CD4-positive, alpha-beta memory T cell (primary cell): ENCODE measurements at regions of chr14 and their contacts with region 1.

Region 1: GRCh38 chr14:76876076-76876475 is 49.9 kb downstream of the LRRC74A start:
- DNase-seq: peak in 4 of 5 donors; percentile 41 to 50 (median 44)
- H3K4me3 ChIP-seq: no peak overlapping the region
- H3K4me3 Mint-ChIP-seq: no peak overlapping the region
- H3K27ac ChIP-seq: no peak overlapping the region
- H3K27ac Mint-ChIP-seq: peak overlapping the region in 2 of 7 donors; percentile 10 to 31
- H3K4me1 ChIP-seq: no peaks in the 10 kb centered on the region
- H3K4me1 Mint-ChIP-seq: no peaks in the 10 kb centered on the region
- H3K27me3 ChIP-seq: no peaks in the 10 kb centered on the region
- H3K27me3 Mint-ChIP-seq: peaks cover 0 to 3% of the 10 kb centered on the region in 2 donors

Region 2: GRCh38 chr14:76710056-76711010 is 165.7 kb before region 1 on chr14:
- CTCF ChIA-PET with region 1: interaction called, 16 read pairs
- POLR2A ChIA-PET with region 1: no interaction called
- intact Hi-C with region 1: no loop called
- DNase-seq: peak in 4 of 5 donors; percentile 14 to 40 (median 26)
- H3K4me3 ChIP-seq: no peak overlapping the region
- H3K4me3 Mint-ChIP-seq: no peak overlapping the region
- H3K27ac ChIP-seq: no peak overlapping the region
- H3K27ac Mint-ChIP-seq: no peak overlapping the region
- H3K4me1 ChIP-seq: no peaks in the 10 kb centered on the region
- H3K4me1 Mint-ChIP-seq: no peaks in the 10 kb centered on the region
- H3K27me3 ChIP-seq: no peaks in the 10 kb centered on the region
- H3K27me3 Mint-ChIP-seq: peaks cover 6 to 9% of the 10 kb centered on the region in 2 donors

Region 3: GRCh38 chr14:76773188-76773885 is 102.7 kb before region 1 on chr14:
- CTCF ChIA-PET with region 1: no interaction called
- POLR2A ChIA-PET with region 1: no interaction called
- intact Hi-C with region 1: no loop called
- DNase-seq: no peak
- H3K4me3 ChIP-seq: no peak overlapping the region
- H3K4me3 Mint-ChIP-seq: no peak overlapping the region
- H3K27ac ChIP-seq: no peak overlapping the region
- H3K27ac Mint-ChIP-seq: no peak overlapping the region
- H3K4me1 ChIP-seq: peaks cover 16% of the 10 kb centered on the region
- H3K4me1 Mint-ChIP-seq: peaks cover 4 to 15% (median 9%) of the 10 kb centered on the region in 4 donors
- H3K27me3 ChIP-seq: no peaks in the 10 kb centered on the region
- H3K27me3 Mint-ChIP-seq: no peaks in the 10 kb centered on the region

Region 4: DNA sequence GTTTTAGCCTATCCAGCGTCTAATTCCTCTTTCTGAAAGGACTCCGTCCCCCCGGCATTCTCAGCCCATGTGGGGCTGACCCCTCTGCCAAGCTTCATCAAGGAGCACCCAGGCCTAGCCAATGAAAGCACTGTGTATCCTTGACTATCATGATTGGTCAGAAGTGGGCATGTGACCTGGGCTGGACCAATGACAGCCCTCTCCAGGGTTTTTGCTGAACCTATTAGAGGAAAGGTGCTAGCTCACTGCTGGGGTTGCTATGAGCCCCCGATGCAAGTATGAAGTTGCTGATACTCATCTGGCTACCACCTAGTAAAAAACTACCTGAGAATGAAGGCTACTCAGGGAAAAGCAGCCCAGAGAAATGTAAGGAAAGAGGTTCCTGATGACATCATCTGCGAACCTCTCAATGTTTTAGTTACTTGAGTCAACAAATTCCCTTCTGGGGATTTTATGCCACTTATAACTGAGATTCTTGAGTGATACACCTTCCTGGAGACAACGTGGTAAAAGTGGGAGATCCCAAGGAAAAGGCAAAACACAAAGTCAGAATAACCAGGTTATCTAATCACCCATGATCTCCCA is 18.3 kb after region 1 on chr14:
- CTCF ChIA-PET with region 1: interaction called, 72 read pairs
- POLR2A ChIA-PET with region 1: no interaction called
- intact Hi-C with region 1: no loop called
- DNase-seq: no peak
- H3K4me3 ChIP-seq: no peak overlapping the region
- H3K4me3 Mint-ChIP-seq: no peak overlapping the region
- H3K27ac ChIP-seq: no peak overlapping the region
- H3K27ac Mint-ChIP-seq: no peak overlapping the region
- H3K4me1 ChIP-seq: no peaks in the 10 kb centered on the region
- H3K4me1 Mint-ChIP-seq: no peaks in the 10 kb centered on the region
- H3K27me3 ChIP-seq: no peaks in the 10 kb centered on the region
- H3K27me3 Mint-ChIP-seq: no peaks in the 10 kb centered on the region

Region 5: GRCh38 chr14:76962303-76962660 is 86.2 kb after region 1 on chr14:
- CTCF ChIA-PET with region 1: interaction called, 19 read pairs
- POLR2A ChIA-PET with region 1: no interaction called
- intact Hi-C with region 1: no loop called
- DNase-seq: no peak
- H3K4me3 ChIP-seq: peak overlapping the region; percentile 48 to 61
- H3K4me3 Mint-ChIP-seq: peak overlapping the region; percentile 73 to 93 (median 86)
- H3K27ac ChIP-seq: peak overlapping the region; percentile 81
- H3K27ac Mint-ChIP-seq: peak overlapping the region; percentile 87 to 100 (median 97)
- H3K4me1 ChIP-seq: peaks cover 78% of the 10 kb centered on the region
- H3K4me1 Mint-ChIP-seq: peaks cover 50 to 79% (median 63%) of the 10 kb centered on the region in 4 donors
- H3K27me3 ChIP-seq: no peaks in the 10 kb centered on the region
- H3K27me3 Mint-ChIP-seq: no peaks in the 10 kb centered on the region

Region 6: GRCh38 chr14:77067632-77068514 is 191.8 kb after region 1 on chr14:
- CTCF ChIA-PET with region 1: interaction called, 628 read pairs
- POLR2A ChIA-PET with region 1: interaction called, 15 read pairs
- intact Hi-C with region 1: loop called (anchors 1 kb)
- DNase-seq: peak in 4 of 5 donors; percentile 45 to 63 (median 58)
- H3K4me3 ChIP-seq: no peak overlapping the region
- H3K4me3 Mint-ChIP-seq: no peak overlapping the region
- H3K27ac ChIP-seq: no peak overlapping the region
- H3K27ac Mint-ChIP-seq: no peak overlapping the region
- H3K4me1 ChIP-seq: no peaks in the 10 kb centered on the region
- H3K4me1 Mint-ChIP-seq: peaks cover 0 to 3% (median under 1%) of the 10 kb centered on the region in 4 donors
- H3K27me3 ChIP-seq: no peaks in the 10 kb centered on the region
- H3K27me3 Mint-ChIP-seq: peaks cover 0 to 4% of the 10 kb centered on the region in 2 donors

Region 7: GRCh38 chr14:77314043-77314442 is 438.0 kb after region 1 on chr14:
- CTCF ChIA-PET with region 1: interaction called, 33 read pairs
- POLR2A ChIA-PET with region 1: no interaction called
- intact Hi-C with region 1: loop called (anchors 1 kb)
- DNase-seq: no peak
- H3K4me3 ChIP-seq: no peak overlapping the region
- H3K4me3 Mint-ChIP-seq: no peak overlapping the region
- H3K27ac ChIP-seq: no peak overlapping the region
- H3K27ac Mint-ChIP-seq: no peak overlapping the region
- H3K4me1 ChIP-seq: no peaks in the 10 kb centered on the region
- H3K4me1 Mint-ChIP-seq: no peaks in the 10 kb centered on the region
- H3K27me3 ChIP-seq: no peaks in the 10 kb centered on the region
- H3K27me3 Mint-ChIP-seq: no peaks in the 10 kb centered on the region